Left cardiac atrium (tissue), 4 donors: ENCODE measurements at regions of chr3 and their contacts with region 1.

Region 1: DNA sequence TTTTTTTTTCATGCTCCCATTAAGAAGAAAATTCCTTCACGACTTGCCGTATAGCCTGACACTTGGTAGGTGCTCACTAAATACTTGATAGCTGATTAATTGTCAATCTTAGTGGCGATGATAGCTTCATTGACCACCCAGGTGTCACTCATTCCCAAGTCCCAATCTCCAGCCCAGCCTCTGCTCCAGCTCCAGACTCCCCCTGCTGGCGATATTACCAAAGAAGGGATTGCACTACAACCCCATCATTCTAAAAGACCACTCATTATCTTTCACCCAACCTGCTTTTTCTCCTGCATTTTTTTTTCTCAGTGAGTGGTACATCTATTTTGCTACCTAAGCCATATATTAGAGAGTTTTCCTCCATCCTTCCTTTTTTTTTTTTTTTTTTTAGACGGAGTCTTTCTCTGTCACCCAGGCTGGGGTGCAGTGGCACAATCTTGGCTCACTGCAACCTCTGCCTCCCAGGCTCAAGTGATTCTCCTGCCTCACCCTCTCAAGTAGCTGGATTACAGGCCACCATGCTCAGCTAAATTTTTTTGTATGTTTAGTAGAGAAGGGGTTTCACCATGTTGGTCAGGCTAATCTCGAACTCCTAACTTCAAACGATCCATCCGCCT is 19.5 kb upstream of the COMMD2 start:
- DNase-seq: peak; percentile 53
- ATAC-seq: peak in 1 of 2 donors; percentile 62

Region 2: DNA sequence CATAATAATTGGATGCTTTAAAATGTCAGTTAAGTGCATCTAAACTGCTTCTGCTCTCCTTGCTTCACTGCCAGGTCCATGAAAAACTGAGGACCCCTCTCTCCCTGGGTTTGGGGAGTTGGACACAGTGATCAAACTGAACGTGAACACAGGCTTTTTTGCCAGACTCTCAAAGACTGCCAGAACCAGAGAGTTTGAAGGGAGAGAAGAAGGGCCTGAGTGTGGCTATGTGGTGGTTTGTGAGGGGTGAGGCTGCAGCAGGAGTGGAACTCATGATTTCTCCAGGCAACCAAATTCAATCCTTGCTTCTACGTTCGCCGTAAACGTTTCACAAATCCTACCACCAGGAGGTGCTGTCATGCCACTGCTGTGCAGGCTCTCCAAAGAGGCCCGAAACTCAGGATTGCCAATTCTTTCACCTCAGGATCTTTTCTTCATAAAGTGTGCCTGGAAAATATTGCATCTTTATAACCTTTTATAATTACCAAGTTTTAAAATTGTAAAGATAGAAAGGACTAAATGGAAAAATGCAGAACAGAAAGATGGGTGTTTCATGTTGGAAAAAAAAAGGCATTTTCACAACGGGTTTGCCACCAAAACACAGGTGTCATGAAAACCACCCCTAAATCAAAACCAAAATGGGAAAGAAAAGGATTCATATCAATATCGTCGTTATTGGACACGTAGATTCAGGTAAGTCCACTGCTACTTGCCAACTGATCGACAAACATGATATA is 277.6 kb before region 1 on chr3:
- intact Hi-C with region 1: loop called (anchors 5 to 10 kb)
- DNase-seq: peak; percentile 73
- ATAC-seq: peak; percentile 65 to 75

Region 3: GRCh38 chr3:149589332-149589731 is 182.4 kb before region 1 on chr3:
- intact Hi-C with region 1: no loop called
- DNase-seq: no peak
- ATAC-seq: no peak

Region 4: GRCh38 chr3:149670742-149671492 is 100.8 kb before region 1 on chr3:
- intact Hi-C with region 1: no loop called
- DNase-seq: no peak
- ATAC-seq: no peak

Region 5: GRCh38 chr3:149717391-149718056 is 54.2 kb before region 1 on chr3:
- intact Hi-C with region 1: no loop called
- DNase-seq: no peak
- ATAC-seq: peak; percentile 44 to 52